Activated naive CD4-positive, alpha-beta T cell treated with anti-CD3 and anti-CD28 coated beads for 36 hours (primary cell): ENCODE measurements at regions of chr20 and their contacts with region 1.

Region 1: GRCh38 chr20:63520504-63520933 is at the start of gene PPDPF:
- DNase-seq: peak; percentile 81
- H3K4me3 Mint-ChIP-seq: peak within 1 kb of the TSS; percentile 75
- H3K27ac Mint-ChIP-seq: peak within 1 kb of the TSS; percentile 69
- H3K4me1 Mint-ChIP-seq: peaks cover 8% of the 10 kb centered on the region
- H3K27me3 Mint-ChIP-seq: peaks cover 2% of the 10 kb centered on the region
- total RNA-seq, gene PPDPF: 189 to 194 TPM

Region 2: DNA sequence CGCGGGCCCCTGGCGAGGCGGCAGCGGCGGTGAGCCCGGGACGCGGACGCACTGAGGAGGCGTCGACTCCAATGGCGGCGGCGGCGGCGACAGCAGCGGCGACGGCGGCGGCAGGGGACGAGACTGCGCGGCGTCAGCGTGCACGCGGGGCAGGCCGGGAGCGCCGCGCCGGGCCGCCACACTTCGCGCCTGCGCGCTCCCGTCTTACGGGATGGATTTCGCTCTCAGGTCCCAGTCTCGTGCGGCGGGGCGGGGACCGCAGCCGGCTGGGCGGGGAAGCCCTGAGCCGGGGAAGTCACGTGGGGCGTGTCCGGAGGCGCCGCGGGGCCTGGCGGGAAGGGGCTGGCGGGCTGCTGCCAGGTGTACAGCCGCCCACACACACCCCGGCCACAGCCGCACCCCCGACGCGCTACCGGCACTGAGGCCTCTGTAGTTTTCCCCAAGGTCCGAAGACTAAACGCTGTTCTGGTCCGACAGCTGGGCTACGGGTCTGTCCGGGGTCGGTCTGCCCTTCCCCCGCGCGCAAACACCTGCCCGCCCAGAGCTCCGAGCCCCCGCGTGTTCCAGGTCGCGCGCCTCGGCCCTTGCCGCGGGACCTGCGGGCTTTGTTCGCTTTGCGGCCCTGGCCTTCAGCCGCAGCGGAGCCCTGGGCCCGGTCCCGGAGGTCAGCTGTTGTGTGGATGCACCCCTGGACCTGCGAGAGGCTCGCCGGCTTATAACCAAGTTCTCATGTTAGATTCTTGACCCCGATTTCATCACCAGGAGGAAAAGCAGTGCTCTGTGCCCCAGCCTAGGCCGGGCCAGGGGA is 304.3 kb before region 1 on chr20 and contains the start of gene YTHDF1:
- CTCF ChIA-PET with region 1: no interaction called
- intact Hi-C with region 1: loop called (anchors 1 kb)
- DNase-seq: peak; percentile 97
- H3K4me3 Mint-ChIP-seq: peak within 1 kb of the TSS; percentile 94
- H3K27ac Mint-ChIP-seq: peak within 1 kb of the TSS; percentile 87
- H3K4me1 Mint-ChIP-seq: peaks cover 47% of the 10 kb centered on the region
- H3K27me3 Mint-ChIP-seq: no peaks in the 10 kb centered on the region
- total RNA-seq, gene YTHDF1: 27.6 to 27.8 TPM

Region 3: GRCh38 chr20:63434599-63435378 is 85.7 kb before region 1 on chr20:
- CTCF ChIA-PET with region 1: no interaction called
- intact Hi-C with region 1: loop called (anchors 2 kb)
- DNase-seq: peak; percentile 91
- H3K4me3 Mint-ChIP-seq: peak overlapping the region; percentile 0
- H3K27ac Mint-ChIP-seq: peak overlapping the region; percentile 43
- H3K4me1 Mint-ChIP-seq: peaks cover 11% of the 10 kb centered on the region
- H3K27me3 Mint-ChIP-seq: no peaks in the 10 kb centered on the region

Region 4: GRCh38 chr20:63495741-63496595 is 24.6 kb before region 1 on chr20:
- CTCF ChIA-PET with region 1: interaction called, 8 read pairs
- intact Hi-C with region 1: loop called (anchors 2 kb)
- DNase-seq: peak; percentile 84
- H3K4me3 Mint-ChIP-seq: peak overlapping the region; percentile 15
- H3K27ac Mint-ChIP-seq: no peak overlapping the region
- H3K4me1 Mint-ChIP-seq: peaks cover 5% of the 10 kb centered on the region
- H3K27me3 Mint-ChIP-seq: peaks cover 21% of the 10 kb centered on the region

Region 5: DNA sequence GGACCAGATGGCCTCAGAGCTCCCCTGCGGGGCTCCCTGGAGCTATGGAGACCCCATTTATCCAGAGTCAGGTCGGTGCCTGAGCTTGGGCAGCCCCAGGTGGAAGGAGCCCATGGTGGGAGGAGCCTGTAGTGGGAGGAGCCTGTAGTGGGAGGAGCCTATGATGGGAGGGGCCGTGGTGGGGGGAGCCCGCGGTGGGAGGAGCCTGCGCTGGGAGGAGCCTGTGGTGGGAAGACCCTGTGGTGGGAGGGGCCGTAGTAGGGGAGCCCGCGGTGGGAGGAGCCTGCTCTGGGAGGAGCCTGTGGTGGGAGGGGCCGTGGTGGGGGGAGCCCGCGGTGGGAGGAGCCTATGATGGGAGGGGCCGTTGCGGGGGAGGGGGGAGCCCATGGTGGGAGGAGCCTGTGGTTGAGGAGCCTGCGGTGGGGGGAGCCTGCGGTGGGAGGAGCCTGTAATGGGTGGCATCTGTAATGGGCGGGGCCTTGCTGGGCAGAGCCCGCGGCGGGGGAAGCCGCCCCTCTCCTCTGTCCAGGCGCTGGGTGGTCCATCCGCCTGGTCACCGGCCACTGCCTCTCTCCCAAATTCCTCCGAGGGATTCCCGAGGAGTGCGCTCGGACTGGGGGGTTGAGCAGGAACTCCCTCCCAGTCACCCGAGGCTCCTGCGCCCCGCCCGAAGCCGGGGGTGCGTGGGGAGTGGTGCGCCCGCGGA is 32.9 kb after region 1 on chr20:
- CTCF ChIA-PET with region 1: no interaction called
- intact Hi-C with region 1: loop called (anchors 1 kb)
- DNase-seq: peak; percentile 93
- H3K4me3 Mint-ChIP-seq: peak overlapping the region; percentile 47
- H3K27ac Mint-ChIP-seq: no peak overlapping the region
- H3K4me1 Mint-ChIP-seq: peaks cover 13% of the 10 kb centered on the region
- H3K27me3 Mint-ChIP-seq: no peaks in the 10 kb centered on the region

Region 6: DNA sequence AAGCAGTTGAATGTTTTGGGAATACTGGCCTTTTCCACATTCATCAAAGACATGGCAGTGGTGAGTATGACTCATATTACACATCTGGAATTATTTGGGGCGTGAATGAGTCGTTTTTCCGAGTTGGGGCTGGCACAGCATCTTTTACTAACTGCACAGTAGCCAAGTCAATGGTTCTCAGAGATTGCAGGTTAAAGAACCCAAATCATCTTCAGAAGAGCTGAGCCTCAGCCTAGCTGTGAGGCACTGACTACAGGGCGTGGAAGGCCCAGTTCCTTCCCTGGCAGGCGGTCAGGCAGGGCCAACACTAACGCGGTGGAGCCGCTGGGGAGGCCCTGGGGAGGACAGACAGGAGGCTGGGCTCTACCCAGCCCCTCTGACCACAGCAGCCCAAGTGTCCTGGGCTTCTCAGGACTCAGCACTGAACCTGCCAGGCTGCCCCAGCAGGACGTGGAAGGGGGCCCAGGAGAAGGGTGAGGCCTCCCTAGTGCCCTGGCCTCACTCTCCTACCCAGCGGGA is 73.6 kb after region 1 on chr20:
- CTCF ChIA-PET with region 1: no interaction called
- intact Hi-C with region 1: no loop called
- DNase-seq: no peak
- H3K4me3 Mint-ChIP-seq: no peak overlapping the region
- H3K27ac Mint-ChIP-seq: no peak overlapping the region
- H3K4me1 Mint-ChIP-seq: no peaks in the 10 kb centered on the region
- H3K27me3 Mint-ChIP-seq: no peaks in the 10 kb centered on the region

Region 7: DNA sequence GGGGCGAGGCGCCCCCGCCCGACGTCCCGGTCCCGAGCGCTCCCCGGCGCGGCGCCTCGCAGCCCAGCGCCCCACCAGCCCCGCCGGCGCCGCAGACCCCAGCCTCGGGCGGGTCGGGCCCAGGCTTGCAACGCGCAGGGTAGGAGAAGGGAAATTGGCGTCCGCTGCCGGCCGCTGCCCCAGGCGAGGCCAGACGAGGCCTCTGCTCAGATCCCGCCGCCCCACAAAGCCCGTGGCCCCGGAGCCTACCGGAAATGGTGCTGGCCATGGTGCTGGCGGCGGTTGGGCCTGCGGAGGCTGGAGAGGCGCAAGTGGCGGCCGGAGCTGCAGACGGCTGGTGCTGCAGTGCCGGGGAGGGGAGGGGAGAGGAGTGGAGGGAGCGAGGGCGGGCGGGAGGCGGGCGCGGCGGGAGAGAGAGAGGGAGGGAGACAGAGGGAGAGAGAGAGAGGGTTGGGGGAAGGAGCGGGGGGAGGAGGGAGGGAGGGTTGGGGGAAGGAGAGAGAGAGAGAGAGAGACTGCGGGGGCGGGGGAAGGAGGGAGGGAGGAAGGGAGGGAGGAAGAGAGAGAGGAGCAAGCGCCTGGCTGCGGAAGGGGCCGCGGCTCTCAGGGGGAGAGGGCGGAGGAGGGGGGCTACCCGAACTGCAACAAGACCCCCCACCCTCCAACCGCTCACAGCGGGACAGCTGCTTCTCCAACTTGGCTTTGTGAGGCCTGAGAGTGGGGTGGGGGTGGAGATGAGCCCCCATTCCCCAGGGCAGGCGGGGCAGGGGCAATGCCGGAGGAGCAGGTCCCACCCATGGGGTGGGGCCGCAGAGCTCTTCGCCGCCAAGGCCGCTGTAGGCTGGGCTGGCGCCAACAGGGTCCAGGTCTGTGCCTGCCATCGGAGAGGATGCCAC is 132.8 kb after region 1 on chr20 and contains the start of gene STMN3:
- CTCF ChIA-PET with region 1: no interaction called
- intact Hi-C with region 1: no loop called
- DNase-seq: peak; percentile 76
- H3K4me3 Mint-ChIP-seq: peak within 1 kb of the TSS; percentile 65
- H3K27ac Mint-ChIP-seq: peak within 1 kb of the TSS; percentile 50
- H3K4me1 Mint-ChIP-seq: peaks cover 28% of the 10 kb centered on the region
- H3K27me3 Mint-ChIP-seq: no peaks in the 10 kb centered on the region
- total RNA-seq, gene STMN3: 6.7 to 7.3 TPM